Posterior vena cava (tissue), 2 donors: ENCODE measurements at regions of chr22 and their contacts with region 1.

Region 1: DNA sequence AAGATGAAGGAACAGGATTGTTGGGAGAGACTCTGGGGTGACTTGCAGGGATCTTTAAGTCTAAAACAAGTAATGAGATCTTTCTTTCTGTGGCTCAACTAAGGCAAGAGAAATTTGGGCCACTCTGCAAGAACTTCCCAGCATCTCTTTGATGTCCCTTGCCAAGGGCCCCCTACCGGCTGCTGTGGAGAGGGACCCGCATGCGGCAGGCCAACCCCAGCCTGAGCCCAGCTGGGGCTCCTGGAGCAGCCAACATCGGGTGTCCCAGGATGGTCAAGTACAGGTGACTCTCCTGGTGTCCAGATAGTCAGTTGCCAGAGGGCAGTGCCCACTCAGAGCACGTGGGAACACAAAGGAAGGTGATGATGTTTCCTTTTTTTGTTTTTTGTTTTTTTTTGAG is 363.2 kb downstream of the TBC1D22A start:
- DNase-seq: peak; percentile 64

Region 2: DNA sequence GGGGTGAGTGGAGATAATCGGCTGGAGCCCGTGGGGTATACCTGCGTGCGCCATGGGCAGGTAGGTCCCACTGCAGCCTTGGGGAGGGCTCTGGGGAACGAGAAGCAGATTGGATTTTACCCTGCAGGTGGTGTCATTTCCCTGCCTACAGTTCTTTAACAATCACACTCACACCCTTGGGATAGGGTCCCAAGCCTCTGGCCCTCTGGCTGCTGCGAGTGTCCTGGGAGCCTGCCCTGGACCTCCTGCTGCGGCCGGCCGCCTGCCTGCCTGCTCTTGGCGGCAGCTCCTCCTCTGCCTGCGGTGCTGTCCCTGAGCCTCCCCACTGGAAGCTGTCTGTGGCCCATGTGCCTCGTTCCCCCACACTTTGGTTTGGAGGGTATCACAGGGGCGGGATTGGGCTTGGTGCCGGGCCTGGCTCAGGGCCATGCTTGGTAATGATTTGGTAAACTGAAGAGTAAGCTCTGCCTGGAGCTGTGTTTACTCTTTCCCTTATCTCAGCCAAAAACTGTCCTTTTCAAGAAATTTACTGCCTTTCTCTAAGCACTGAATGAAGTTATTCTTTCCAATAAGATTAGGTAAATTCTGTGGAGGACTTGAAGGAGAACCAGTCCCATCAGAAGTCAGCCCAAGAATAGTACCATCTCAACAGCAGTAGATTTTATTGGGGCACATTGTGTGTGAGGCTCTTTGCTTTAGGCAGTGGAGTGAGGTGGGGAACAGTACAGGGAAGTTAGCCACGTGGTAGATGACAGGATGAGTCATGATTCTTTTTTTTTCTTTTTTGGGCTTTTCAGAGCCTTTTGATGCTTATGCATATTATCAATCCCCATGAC is 309.5 kb before region 1 on chr22:
- intact Hi-C with region 1: loop called in 1 of 2 experiments (anchors 2 kb)
- DNase-seq: peak; percentile 80

Region 3: DNA sequence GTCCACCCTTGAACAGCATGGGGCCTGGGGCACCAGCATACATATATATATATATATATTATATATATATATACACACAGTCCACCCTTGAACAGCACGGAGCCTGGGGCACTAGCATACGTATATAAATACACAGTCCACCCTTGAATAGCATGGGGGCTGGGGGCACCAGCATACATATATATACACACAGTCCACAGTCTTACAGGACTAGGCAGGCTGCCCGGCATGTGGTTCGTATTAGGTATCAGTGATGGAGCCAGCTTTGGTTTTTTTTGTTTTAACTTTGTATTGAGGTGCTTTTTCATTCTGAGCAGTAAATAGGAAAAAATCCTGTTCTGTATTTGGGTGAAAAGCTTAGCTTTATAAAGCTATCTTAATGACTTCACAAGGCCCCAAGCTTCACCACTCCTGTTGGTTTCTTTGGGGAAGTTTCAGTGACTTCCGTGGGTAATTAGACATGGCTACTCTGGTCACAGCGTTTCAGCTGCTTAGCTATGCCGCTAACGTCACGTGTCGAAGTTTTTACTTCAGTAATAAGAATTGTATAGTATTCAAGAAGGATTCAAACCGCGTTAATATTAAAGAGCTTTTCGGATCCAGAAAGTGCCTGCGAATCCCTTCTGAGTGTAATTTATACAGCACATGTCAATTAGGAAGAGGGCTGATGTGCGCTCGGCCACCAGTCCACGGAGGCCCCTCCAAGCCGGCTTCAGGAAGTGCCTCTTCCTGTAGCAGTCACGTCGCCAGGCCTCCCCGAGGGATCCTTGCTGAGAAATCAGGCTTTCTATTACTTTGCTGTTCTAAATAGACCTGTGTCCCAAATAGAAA is 183.4 kb before region 1 on chr22:
- intact Hi-C with region 1: no loop called
- DNase-seq: no peak

Region 4: DNA sequence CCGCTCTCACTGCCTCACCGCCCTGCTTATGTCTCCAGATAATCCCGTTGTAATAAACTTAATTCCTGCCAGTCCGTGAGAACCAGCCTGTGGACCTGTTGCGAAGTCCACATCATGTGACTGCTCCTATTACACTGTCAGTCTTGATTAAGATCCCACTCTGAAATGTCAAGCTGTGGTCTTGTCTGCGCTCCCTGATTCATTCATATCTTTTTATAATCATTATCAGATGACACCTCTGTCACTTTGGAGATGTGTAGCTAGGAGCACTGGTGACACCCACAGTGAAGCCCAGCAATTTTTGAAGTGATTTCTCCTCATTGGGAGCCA is 14.2 kb after region 1 on chr22:
- intact Hi-C with region 1: loop called in 1 of 2 experiments (anchors 2 kb)
- DNase-seq: no peak